ENCODE measurements at regions of chr21 and their contacts with region 1.

Region 1: DNA sequence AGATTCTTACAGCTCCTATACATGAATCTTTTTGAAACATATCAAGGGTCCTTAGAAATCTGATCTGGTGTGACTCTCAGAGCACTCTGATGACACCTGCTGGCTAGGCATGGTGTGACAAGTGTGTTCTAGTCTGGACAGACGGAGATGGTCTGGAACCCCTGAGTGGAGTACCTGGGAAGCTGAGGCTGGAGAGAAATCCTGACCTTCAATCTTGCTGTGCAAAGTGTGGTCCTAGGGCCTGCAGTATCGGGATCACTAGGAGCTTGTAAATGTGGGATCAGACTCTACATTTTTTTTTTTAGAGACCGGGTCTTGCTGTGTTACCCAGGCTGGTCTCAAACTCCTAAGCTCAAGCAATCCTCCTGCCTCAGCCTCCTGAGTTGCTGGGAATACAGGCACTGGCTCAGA is 78.6 kb upstream of the SOD1 start:
- DNase-seq: peak; percentile 80
- H3K4me3 Mint-ChIP-seq: no peak overlapping the region
- H3K27ac Mint-ChIP-seq: no peak overlapping the region
- H3K4me1 Mint-ChIP-seq: no peaks in the 10 kb centered on the region
- H3K27me3 Mint-ChIP-seq: peaks cover 25% of the 10 kb centered on the region
- CTCF ChIP-seq: peak; percentile 95

Region 2: DNA sequence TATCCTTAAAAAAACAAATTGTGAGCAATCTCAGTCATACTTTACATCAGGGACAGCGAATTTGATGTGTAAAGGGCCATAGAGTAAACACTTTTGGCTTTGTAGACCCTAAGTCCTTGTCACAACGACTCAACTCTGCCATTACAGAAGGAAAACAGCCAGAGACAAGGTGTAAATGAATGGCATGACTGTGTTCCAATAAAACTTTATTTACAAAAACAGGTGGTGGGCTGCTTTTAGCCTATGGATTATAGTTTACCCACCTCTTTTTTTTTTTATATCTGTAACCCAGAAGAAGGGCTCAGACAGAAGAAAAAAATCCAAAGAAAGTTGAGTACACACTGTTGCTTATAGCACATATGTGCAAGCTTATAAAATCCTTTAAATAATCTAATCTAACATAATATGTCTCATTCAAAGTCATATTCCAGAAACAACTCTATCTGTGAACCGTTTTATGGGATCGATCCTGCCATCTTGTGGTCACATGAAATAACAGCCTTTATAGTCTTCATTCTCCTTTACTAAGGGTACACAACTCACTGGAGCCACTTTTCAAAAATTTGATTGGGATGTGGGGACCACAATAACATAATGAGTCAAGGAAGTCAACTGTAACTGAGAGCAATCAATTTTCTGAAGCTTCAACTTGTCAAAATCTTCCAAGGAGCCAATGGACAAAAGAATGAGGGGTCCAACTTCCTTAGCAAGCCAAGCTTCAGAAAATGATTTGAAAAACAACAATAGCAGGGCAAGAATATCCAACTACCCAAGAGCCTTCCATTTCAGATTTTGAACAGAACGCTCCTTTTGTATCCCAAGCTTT is 400.4 kb before region 1 on chr21:
- CTCF ChIA-PET with region 1: interaction called, 15 read pairs
- POLR2A ChIA-PET with region 1: no interaction called
- intact Hi-C with region 1: no loop called
- DNase-seq: peak; percentile 57
- H3K4me3 Mint-ChIP-seq: no peak overlapping the region
- H3K27ac Mint-ChIP-seq: no peak overlapping the region
- H3K4me1 Mint-ChIP-seq: no peaks in the 10 kb centered on the region
- H3K27me3 Mint-ChIP-seq: no peaks in the 10 kb centered on the region
- CTCF ChIP-seq: peak; percentile 53

Region 3: DNA sequence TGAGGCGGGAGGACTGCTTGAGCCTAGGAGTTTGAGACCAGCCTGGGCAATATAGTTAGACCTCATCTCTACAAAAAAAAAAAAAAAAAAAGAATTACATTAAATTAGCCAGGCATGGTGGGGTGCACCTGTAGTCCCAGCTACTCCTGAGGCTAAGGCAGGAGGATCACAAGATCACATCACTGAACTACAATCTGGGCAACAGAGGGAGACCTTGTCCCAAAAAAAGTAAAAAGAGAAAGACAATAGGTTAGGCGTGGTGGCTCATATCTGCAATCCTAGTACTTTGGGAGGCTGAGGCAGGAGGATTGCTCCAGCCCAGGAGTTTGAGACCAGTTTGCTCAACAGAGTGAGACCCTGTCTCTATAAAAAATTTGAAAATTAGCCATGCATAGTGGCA is 367.1 kb before region 1 on chr21:
- CTCF ChIA-PET with region 1: interaction called, 31 read pairs
- POLR2A ChIA-PET with region 1: interaction called, 4 read pairs
- intact Hi-C with region 1: loop called (anchors 1 kb)
- DNase-seq: peak; percentile 39
- H3K4me3 Mint-ChIP-seq: no peak overlapping the region
- H3K27ac Mint-ChIP-seq: no peak overlapping the region
- H3K4me1 Mint-ChIP-seq: peaks cover 4% of the 10 kb centered on the region
- H3K27me3 Mint-ChIP-seq: no peaks in the 10 kb centered on the region
- CTCF ChIP-seq: no peak

Region 4: DNA sequence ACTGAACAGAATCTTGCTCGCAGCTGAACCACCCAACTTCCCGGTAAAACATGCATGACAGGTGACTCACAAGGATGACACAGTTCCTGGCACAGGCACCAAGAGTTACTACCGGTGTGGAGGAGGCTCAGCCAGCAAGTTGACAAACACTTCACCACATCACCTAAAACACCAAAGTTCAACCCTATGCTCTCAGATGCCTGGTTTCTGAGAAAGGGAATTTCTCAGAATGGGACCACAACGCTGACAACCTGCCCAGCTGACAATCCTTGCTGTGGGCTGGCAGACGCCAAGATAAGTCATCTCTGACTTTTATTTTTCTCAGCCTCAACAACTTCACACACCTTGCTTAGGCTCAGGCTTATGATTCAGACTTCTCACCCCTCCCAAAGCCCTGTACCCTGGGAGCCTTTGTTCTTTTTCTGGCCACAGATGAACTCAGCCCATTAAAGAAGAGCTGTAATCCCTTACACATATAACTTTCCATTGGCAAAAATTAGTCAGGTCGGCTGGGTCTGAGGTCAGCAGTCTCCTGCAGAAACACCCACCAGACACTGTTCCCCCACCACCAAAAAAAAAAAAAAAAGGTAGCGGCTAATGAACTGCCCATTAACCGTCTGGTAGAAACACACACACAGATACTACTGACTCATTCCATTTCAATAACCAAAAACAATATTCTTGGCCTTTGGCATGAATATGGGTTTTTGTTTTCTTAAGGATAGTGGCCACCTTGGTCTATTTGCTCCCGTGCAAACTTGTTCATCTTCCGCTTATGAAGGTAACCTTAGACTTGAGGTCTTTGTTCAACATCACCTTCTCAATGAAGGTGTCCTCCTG is 226.0 kb before region 1 on chr21:
- CTCF ChIA-PET with region 1: interaction called, 10 read pairs
- POLR2A ChIA-PET with region 1: interaction called, 3 read pairs
- intact Hi-C with region 1: no loop called
- DNase-seq: peak; percentile 97
- H3K4me3 Mint-ChIP-seq: peak overlapping the region; percentile 28
- H3K27ac Mint-ChIP-seq: peak overlapping the region; percentile 86
- H3K4me1 Mint-ChIP-seq: peaks cover 29% of the 10 kb centered on the region
- H3K27me3 Mint-ChIP-seq: no peaks in the 10 kb centered on the region
- CTCF ChIP-seq: no peak

Region 5: DNA sequence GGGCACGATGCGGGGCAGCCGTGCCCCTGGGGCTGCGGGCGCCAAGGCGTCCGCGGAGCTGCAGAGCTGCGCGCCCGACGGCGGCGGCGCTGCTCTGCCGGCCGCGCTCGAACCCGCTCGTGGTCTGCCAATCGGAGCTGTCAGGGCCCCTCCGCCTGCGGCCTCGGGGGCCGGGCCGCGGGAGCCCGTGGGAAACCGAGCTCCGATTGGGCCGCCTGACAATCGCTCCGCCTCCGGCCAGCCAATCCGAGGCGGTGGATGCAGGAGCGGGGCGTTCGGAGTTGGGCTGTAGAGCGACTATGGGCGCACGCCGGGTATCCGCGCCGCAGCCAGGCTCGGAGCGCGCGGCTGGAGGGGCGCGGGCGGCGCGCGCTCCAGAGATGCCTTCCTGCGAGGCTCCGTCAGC is 21.9 kb before region 1 on chr21:
- CTCF ChIA-PET with region 1: interaction called, 17 read pairs
- POLR2A ChIA-PET with region 1: no interaction called
- intact Hi-C with region 1: no loop called
- DNase-seq: peak; percentile 93
- H3K4me3 Mint-ChIP-seq: peak overlapping the region; percentile 78
- H3K27ac Mint-ChIP-seq: no peak overlapping the region
- H3K4me1 Mint-ChIP-seq: peaks cover 5% of the 10 kb centered on the region
- H3K27me3 Mint-ChIP-seq: no peaks in the 10 kb centered on the region
- CTCF ChIP-seq: peak; percentile 34

Region 6: DNA sequence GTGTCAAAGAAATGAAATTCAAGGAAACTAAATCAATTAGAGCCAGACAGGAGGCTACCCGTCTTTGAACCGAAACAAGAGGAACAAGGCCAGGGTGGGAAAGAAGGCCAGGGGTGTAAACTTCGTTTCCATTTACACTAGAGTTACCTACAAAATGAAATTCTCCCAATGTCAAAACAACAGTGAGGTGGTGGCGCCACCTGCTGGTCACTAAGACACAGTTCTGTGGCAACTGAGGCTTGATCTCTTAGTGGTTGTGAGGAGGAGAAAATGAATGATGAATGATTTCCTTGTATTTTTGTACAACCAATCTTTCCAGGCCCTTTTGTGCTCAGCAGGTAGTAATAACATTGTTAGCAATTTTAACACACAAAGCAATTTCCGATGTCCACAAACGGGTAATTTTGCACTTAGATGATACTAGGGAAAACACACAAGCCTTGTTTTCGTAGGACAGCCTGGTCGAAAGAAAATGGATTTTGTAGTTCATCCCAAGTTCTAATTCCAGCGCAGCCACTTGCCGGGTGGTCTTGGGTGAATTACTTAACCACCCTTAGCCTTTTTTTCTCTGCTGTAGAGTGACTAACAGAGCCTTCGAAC is 23.8 kb after region 1 on chr21:
- CTCF ChIA-PET with region 1: interaction called, 38 read pairs
- POLR2A ChIA-PET with region 1: interaction called, 3 read pairs
- intact Hi-C with region 1: no loop called
- DNase-seq: peak; percentile 80
- H3K4me3 Mint-ChIP-seq: no peak overlapping the region
- H3K27ac Mint-ChIP-seq: no peak overlapping the region
- H3K4me1 Mint-ChIP-seq: no peaks in the 10 kb centered on the region
- H3K27me3 Mint-ChIP-seq: no peaks in the 10 kb centered on the region
- CTCF ChIP-seq: peak; percentile 83

Region 7: GRCh38 chr21:31629972-31630711 is 49.3 kb after region 1 on chr21:
- CTCF ChIA-PET with region 1: no interaction called
- POLR2A ChIA-PET with region 1: no interaction called
- intact Hi-C with region 1: no loop called
- DNase-seq: peak; percentile 96
- H3K4me3 Mint-ChIP-seq: peak overlapping the region; percentile 35
- H3K27ac Mint-ChIP-seq: peak overlapping the region; percentile 43
- H3K4me1 Mint-ChIP-seq: peaks cover 14% of the 10 kb centered on the region
- H3K27me3 Mint-ChIP-seq: no peaks in the 10 kb centered on the region
- CTCF ChIP-seq: no peak

Measured in MCF 10A (cell line).